Natural killer cell (primary cell): ENCODE measurements at regions of chr13 and their contacts with region 1.

Region 1: GRCh38 chr13:99269627-99270241 is 11.6 kb upstream of the GPR18 start:
- DNase-seq: peak in 1 of 2 donors; percentile 83
- ATAC-seq: peak; percentile 49 to 70 (median 59)
- H3K4me3 ChIP-seq: no peak overlapping the region
- H3K4me3 Mint-ChIP-seq: no peak overlapping the region
- H3K27ac ChIP-seq: peak overlapping the region; percentile 91
- H3K27ac Mint-ChIP-seq: peak overlapping the region in 1 of 2 donors; percentile 85
- H3K4me1 ChIP-seq: peaks cover 23% of the 10 kb centered on the region
- H3K4me1 Mint-ChIP-seq: peaks cover 42 to 45% of the 10 kb centered on the region in 2 donors
- H3K27me3 ChIP-seq: no peaks in the 10 kb centered on the region
- H3K27me3 Mint-ChIP-seq: no peaks in the 10 kb centered on the region
- CTCF ChIP-seq: peak; percentile 85

Region 2: GRCh38 chr13:97512731-97513130 is 1757.0 kb before region 1 on chr13:
- intact Hi-C with region 1: no loop called
- DNase-seq: no peak
- ATAC-seq: no peak
- H3K4me3 ChIP-seq: no peak overlapping the region
- H3K4me3 Mint-ChIP-seq: no peak overlapping the region
- H3K27ac ChIP-seq: no peak overlapping the region
- H3K27ac Mint-ChIP-seq: no peak overlapping the region
- H3K4me1 ChIP-seq: no peaks in the 10 kb centered on the region
- H3K4me1 Mint-ChIP-seq: no peaks in the 10 kb centered on the region
- H3K27me3 ChIP-seq: no peaks in the 10 kb centered on the region
- H3K27me3 Mint-ChIP-seq: peaks cover 4 to 24% of the 10 kb centered on the region in 2 donors
- CTCF ChIP-seq: no peak

Region 3: GRCh38 chr13:99033814-99034213 is 235.9 kb before region 1 on chr13:
- intact Hi-C with region 1: loop called (anchors 10 kb)
- DNase-seq: peak in 1 of 2 donors; percentile 55
- ATAC-seq: no peak
- H3K4me3 ChIP-seq: no peak overlapping the region
- H3K4me3 Mint-ChIP-seq: no peak overlapping the region
- H3K27ac ChIP-seq: no peak overlapping the region
- H3K27ac Mint-ChIP-seq: peak overlapping the region in 1 of 2 donors; percentile 33
- H3K4me1 ChIP-seq: peaks cover 3% of the 10 kb centered on the region
- H3K4me1 Mint-ChIP-seq: peaks cover 4% of the 10 kb centered on the region in 2 donors
- H3K27me3 ChIP-seq: no peaks in the 10 kb centered on the region
- H3K27me3 Mint-ChIP-seq: peaks cover 6 to 16% of the 10 kb centered on the region in 2 donors
- CTCF ChIP-seq: no peak

Region 4: GRCh38 chr13:99176309-99177276 is 93.1 kb before region 1 on chr13:
- intact Hi-C with region 1: loop called (anchors 1 kb)
- DNase-seq: peak; percentile 70 to 91
- ATAC-seq: peak; percentile 90 to 99 (median 98)
- H3K4me3 ChIP-seq: no peak overlapping the region
- H3K4me3 Mint-ChIP-seq: no peak overlapping the region
- H3K27ac ChIP-seq: no peak overlapping the region
- H3K27ac Mint-ChIP-seq: no peak overlapping the region
- H3K4me1 ChIP-seq: peaks cover 28% of the 10 kb centered on the region
- H3K4me1 Mint-ChIP-seq: peaks cover 6 to 7% of the 10 kb centered on the region in 2 donors
- H3K27me3 ChIP-seq: peaks cover 3% of the 10 kb centered on the region
- H3K27me3 Mint-ChIP-seq: peaks cover 21 to 43% of the 10 kb centered on the region in 2 donors
- CTCF ChIP-seq: peak; percentile 86

Region 5: GRCh38 chr13:99356158-99357091 is 86.7 kb after region 1 on chr13:
- intact Hi-C with region 1: loop called (anchors 1 kb)
- DNase-seq: peak; percentile 51 to 94
- ATAC-seq: peak; percentile 61 to 79 (median 77)
- H3K4me3 ChIP-seq: no peak overlapping the region
- H3K4me3 Mint-ChIP-seq: peak overlapping the region; percentile 81
- H3K27ac ChIP-seq: peak overlapping the region; percentile 99
- H3K27ac Mint-ChIP-seq: peak overlapping the region; percentile 89 to 91
- H3K4me1 ChIP-seq: peaks cover 88% of the 10 kb centered on the region
- H3K4me1 Mint-ChIP-seq: peaks cover 89% of the 10 kb centered on the region in 2 donors
- H3K27me3 ChIP-seq: no peaks in the 10 kb centered on the region
- H3K27me3 Mint-ChIP-seq: no peaks in the 10 kb centered on the region
- CTCF ChIP-seq: no peak

Region 6: DNA sequence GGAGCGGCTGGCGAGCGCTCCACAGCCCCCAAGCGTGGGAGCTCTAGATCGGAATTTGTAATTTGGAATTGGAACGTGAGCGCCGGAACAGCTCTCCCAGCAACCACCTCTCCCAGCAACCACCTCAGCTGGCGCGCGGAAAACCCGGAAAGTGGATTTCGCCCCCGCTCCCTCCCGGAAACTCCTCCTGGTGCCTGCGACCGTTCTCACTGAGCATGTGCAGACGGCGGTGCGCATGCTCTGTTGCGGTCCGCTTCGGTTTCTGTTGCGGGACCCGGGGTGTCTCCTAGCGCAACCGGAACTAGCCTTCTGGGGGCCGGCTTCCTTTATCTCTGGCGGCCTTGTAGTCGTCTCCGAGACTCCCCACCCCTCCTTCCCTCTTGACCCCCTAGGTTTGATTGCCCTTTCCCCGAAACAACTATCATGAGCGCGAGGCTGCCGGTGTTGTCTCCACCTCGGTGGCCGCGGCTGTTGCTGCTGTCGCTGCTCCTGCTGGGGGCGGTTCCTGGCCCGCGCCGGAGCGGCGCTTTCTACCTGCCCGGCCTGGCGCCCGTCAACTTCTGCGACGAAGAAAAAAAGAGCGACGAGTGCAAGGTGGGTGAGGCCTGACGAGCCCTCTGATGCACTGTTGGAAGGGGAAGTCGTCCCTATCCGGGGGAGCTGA is 231.6 kb after region 1 on chr13 and contains the start of gene TM9SF2:
- intact Hi-C with region 1: loop called (anchors 5 kb)
- DNase-seq: peak; percentile 97 to 99
- ATAC-seq: peak; percentile 61 to 78 (median 74)
- H3K4me3 ChIP-seq: peak within 1 kb of the TSS; percentile 88
- H3K4me3 Mint-ChIP-seq: peak within 1 kb of the TSS; percentile 96
- H3K27ac ChIP-seq: peak within 1 kb of the TSS; percentile 89
- H3K27ac Mint-ChIP-seq: peak within 1 kb of the TSS; percentile 94 to 98
- H3K4me1 ChIP-seq: peaks cover 45% of the 10 kb centered on the region
- H3K4me1 Mint-ChIP-seq: peaks cover 81 to 83% of the 10 kb centered on the region in 2 donors
- H3K27me3 ChIP-seq: no peaks in the 10 kb centered on the region
- H3K27me3 Mint-ChIP-seq: no peaks in the 10 kb centered on the region
- CTCF ChIP-seq: no peak
- total RNA-seq, gene TM9SF2: 41.8 to 62.1 (median 51.4) TPM